PC-3 (cell line): ENCODE measurements at regions of chr10 and their contacts with region 1.

Region 1: GRCh38 chr10:130127364-130128061 is 8.7 kb upstream of the GLRX3 start:
- DNase-seq: peak; percentile 72
- ATAC-seq: peak; percentile 98
- H3K4me3 ChIP-seq: no peak overlapping the region
- H3K27ac ChIP-seq: no peak overlapping the region
- H3K4me1 ChIP-seq: no peaks in the 10 kb centered on the region
- H3K27me3 ChIP-seq: no peaks in the 10 kb centered on the region
- CTCF ChIP-seq: peak; percentile 75

Region 2: DNA sequence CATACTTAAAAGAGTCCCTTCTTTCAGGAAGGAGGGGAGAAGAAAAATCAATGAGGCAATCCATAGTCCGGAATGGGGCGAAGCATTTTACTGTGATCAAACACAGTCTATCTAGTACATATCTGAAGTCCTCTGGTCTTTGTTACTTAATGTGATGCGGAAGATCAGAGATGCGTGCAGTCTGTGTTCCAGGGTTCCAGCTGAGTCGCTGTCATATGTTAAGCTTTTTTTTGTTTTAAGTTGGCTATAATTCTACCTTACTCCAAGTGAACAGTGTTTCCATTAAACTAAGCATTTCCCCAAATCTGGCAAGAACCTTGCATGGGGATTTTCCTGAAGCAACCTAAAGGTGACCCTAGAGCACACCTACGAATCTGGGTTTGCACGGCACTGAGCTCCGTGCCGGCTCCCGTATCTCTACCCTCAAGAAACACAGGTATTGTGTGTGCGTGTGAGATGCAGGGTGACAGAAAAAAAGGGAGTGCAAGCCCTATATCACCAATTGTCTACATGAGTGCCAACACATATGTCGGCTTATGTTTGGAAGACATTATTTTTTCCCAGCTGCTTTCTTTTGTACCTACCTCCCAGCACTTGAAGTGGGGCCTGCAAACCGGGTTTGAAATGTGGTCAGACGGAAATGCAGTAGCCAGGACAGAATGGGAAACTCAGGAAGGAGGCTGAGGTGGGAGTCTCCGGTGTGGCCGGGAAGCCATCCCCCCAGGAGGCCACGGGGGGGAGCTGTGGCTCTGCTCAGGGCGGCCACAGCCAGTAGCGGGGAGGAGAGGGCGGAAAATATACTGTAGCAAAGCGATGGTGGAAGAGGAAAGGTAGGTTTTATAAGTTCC is 1096.3 kb before region 1 on chr10:
- CTCF ChIA-PET with region 1: no interaction called
- POLR2A ChIA-PET with region 1: no interaction called
- intact Hi-C with region 1: loop called (anchors 1 kb)
- DNase-seq: peak; percentile 39
- ATAC-seq: peak; percentile 80; the same call in 1 of the 2 replicates
- H3K4me3 ChIP-seq: no peak overlapping the region
- H3K27ac ChIP-seq: no peak overlapping the region
- H3K4me1 ChIP-seq: no peaks in the 10 kb centered on the region
- H3K27me3 ChIP-seq: peaks cover 67% of the 10 kb centered on the region
- CTCF ChIP-seq: peak; percentile 81

Region 3: DNA sequence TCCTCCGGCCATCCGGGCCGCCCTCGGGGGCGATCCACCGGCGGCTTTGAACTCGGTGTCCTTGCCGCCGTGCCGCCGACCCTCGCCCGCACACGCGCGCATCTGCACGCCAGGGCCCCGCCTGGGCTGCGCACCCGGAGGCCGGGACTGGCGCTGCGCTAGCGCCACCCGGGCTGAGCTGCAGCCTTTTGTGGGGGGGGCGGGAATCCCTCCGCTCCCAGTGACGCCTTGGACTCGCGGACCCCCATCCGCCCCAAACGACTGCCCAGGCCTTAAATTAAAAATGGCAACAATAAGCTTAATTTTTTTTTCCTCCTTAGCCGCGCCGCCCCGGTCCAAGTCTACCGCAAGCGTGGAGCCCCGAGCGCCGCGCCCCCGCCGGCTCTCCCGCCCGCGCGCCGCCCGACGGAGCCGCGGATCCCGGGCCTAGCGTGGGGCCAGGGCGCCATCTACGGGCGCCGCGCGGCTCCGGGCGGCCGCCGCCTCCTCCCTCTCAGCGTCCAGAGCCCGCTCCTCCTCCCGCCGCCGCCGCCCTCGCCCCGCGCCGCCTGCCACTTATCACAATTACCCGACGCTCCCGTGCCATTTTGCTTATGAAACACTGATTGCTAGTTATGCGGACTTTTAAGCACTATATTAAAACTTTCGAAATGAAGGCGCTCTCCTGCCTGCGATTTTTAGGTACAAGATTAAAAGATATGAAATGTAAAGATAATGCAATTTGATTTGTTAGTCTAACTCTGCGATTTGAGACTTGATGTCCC is 155.9 kb before region 1 on chr10:
- CTCF ChIA-PET with region 1: no interaction called
- POLR2A ChIA-PET with region 1: no interaction called
- intact Hi-C with region 1: loop called (anchors 5 kb)
- DNase-seq: peak; percentile 56
- ATAC-seq: peak; percentile 84
- H3K4me3 ChIP-seq: peak overlapping the region; percentile 59
- H3K27ac ChIP-seq: no peak overlapping the region
- H3K4me1 ChIP-seq: peaks cover 6% of the 10 kb centered on the region
- H3K27me3 ChIP-seq: peaks cover 52% of the 10 kb centered on the region
- CTCF ChIP-seq: no peak; the same call in 1 of the 2 replicates

Region 4: GRCh38 chr10:130045091-130045652 is 82.3 kb before region 1 on chr10:
- CTCF ChIA-PET with region 1: no interaction called
- POLR2A ChIA-PET with region 1: no interaction called
- intact Hi-C with region 1: no loop called
- DNase-seq: peak; percentile 19
- ATAC-seq: no peak; the same call in 1 of the 2 replicates
- H3K4me3 ChIP-seq: no peak overlapping the region
- H3K27ac ChIP-seq: no peak overlapping the region
- H3K4me1 ChIP-seq: no peaks in the 10 kb centered on the region
- H3K27me3 ChIP-seq: no peaks in the 10 kb centered on the region
- CTCF ChIP-seq: peak; percentile 60

Region 5: DNA sequence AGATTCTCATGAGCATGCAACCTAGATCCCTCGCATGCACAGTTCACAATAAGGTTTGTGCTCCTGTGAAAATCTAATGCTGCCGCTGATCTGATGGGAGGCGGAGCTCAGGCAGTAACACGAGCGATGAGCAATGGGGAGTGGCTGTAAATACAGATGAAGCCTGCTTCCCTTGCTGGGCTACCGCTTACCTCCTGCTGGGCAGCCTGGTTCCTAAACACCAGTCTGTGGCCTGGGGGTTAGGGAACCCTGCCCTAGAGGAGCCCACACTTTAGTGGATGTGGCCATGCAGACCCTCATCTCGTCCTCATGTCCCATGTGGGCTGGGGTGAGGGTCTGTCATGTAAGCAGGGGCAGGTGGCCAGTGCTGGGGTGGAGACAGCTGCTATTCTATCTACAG is 426.3 kb after region 1 on chr10:
- CTCF ChIA-PET with region 1: no interaction called
- POLR2A ChIA-PET with region 1: no interaction called
- intact Hi-C with region 1: no loop called
- DNase-seq: no peak
- ATAC-seq: no peak
- H3K4me3 ChIP-seq: no peak overlapping the region
- H3K27ac ChIP-seq: no peak overlapping the region
- H3K4me1 ChIP-seq: no peaks in the 10 kb centered on the region
- H3K27me3 ChIP-seq: no peaks in the 10 kb centered on the region
- CTCF ChIP-seq: no peak